ENCODE measurements at regions of chr18 and their contacts with region 1.

Region 1: DNA sequence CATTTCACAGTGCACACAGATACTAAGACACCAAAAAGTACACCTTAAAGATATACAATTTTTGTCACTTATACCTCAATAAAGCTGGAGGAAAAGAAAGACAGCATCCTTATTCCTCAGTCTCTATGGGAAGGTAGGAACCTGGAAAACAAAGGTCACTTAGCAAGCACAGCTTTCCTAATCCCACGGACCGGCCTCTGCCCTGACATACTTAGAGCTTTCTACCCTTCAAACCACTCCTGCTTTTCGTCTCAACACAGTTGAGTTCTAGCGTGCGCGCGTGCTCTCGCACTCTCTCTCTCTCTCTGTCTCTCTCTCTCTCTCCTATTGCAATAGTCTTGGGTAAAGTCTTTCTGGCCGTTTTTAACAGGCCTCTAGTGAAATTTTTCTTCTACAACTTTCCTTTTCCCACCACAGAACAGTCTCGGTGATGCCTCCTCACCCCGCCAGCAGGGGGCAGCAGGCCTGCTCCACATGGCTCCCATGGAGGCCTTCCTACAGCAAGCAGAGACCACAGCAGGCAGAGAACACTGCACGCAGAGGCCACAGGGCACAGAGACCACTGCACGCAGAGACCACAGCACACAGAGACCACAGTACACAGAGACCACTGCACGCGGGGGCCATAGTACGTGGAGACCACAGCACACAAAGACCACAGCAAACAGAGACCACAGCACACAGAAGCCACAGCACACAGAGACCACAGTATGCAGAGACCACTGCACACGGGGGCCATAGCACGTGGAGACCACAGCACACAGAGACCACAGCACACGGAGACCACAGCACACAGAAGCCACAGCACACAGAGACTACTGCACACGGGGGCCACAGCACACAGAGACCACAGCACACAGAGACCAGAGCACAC is 106.9 kb downstream of the FBXO15 start:
- DNase-seq: peak; percentile 62
- H3K4me3 Mint-ChIP-seq: no peak overlapping the region
- H3K27ac Mint-ChIP-seq: no peak overlapping the region
- H3K4me1 Mint-ChIP-seq: no peaks in the 10 kb centered on the region
- H3K27me3 Mint-ChIP-seq: no peaks in the 10 kb centered on the region

Region 2: GRCh38 chr18:73980289-73980979 is 60.3 kb before region 1 on chr18:
- intact Hi-C with region 1: no loop called
- DNase-seq: no peak
- H3K4me3 Mint-ChIP-seq: no peak overlapping the region
- H3K27ac Mint-ChIP-seq: no peak overlapping the region
- H3K4me1 Mint-ChIP-seq: peaks cover 7% of the 10 kb centered on the region
- H3K27me3 Mint-ChIP-seq: peaks cover 2% of the 10 kb centered on the region

Region 3: GRCh38 chr18:74063023-74063422 is 22.3 kb after region 1 on chr18:
- intact Hi-C with region 1: loop called (anchors 1 kb)
- DNase-seq: no peak
- H3K4me3 Mint-ChIP-seq: peak overlapping the region; percentile 19
- H3K27ac Mint-ChIP-seq: peak overlapping the region; percentile 77
- H3K4me1 Mint-ChIP-seq: peaks cover 50% of the 10 kb centered on the region
- H3K27me3 Mint-ChIP-seq: no peaks in the 10 kb centered on the region

Region 4: GRCh38 chr18:74116633-74117554 is 76.2 kb after region 1 on chr18:
- intact Hi-C with region 1: loop called (anchors 1 kb)
- DNase-seq: no peak
- H3K4me3 Mint-ChIP-seq: no peak overlapping the region
- H3K27ac Mint-ChIP-seq: no peak overlapping the region
- H3K4me1 Mint-ChIP-seq: peaks cover 8% of the 10 kb centered on the region
- H3K27me3 Mint-ChIP-seq: peaks cover 2% of the 10 kb centered on the region

Region 5: DNA sequence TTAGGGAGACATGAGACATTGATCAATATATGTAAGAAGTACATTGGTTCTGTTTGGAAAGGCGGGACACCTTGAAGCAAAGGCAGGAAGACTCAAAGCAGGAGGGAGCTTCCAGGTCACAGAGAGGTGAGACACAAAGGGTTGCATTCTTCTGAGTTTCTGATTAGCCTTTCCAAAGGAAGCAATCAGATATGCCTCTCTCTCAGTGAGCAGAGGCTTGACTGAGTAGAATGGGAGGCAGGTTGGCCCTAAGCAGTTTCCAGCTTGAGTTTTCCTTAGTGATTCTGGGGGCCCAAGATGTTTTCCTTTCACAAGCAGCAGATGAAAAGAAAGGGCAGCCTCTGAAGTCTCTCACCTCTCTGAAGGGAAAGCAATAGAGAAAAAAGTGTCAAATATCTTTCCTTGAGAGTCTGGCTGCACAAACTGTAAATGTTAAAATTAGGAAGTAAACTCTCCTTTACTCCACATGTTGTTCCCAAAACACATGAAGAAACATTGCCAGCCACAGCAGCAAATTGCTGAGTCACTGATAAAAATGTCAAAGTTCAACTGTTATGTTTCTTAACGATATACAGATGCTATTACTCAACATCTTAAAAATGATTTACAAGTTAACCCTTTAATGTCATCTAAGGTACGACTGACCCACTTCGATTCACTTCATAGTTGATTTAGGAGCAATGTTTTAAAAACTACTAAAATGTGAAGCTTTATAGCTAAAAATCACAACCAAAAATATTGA is 210.8 kb after region 1 on chr18:
- intact Hi-C with region 1: no loop called
- DNase-seq: no peak
- H3K4me3 Mint-ChIP-seq: no peak overlapping the region
- H3K27ac Mint-ChIP-seq: no peak overlapping the region
- H3K4me1 Mint-ChIP-seq: peaks cover 19% of the 10 kb centered on the region
- H3K27me3 Mint-ChIP-seq: no peaks in the 10 kb centered on the region

Region 6: GRCh38 chr18:74342416-74343043 is 301.8 kb after region 1 on chr18:
- intact Hi-C with region 1: loop called (anchors 1 kb)
- DNase-seq: no peak
- H3K4me3 Mint-ChIP-seq: no peak overlapping the region
- H3K27ac Mint-ChIP-seq: no peak overlapping the region
- H3K4me1 Mint-ChIP-seq: no peaks in the 10 kb centered on the region
- H3K27me3 Mint-ChIP-seq: peaks cover 18% of the 10 kb centered on the region

Region 7: GRCh38 chr18:74551936-74552555 is 511.4 kb after region 1 on chr18:
- intact Hi-C with region 1: loop called (anchors 2 kb)
- DNase-seq: peak; percentile 60
- H3K4me3 Mint-ChIP-seq: no peak overlapping the region
- H3K27ac Mint-ChIP-seq: no peak overlapping the region
- H3K4me1 Mint-ChIP-seq: peaks cover 6% of the 10 kb centered on the region
- H3K27me3 Mint-ChIP-seq: peaks cover 13% of the 10 kb centered on the region

Measured in activated T-helper 1 cell treated with anti-CD3 and anti-CD28 coated beads, Interleukin-12 subunit alpha, Interleukin-12 subunit beta, Interleukin-2, Interleukin-4 antibody, amounts not matched to agents 30 ng/mL and 10 ng/mL and 1 ng/mL, durations not matched to agents 14 hours and 24 hours and 36 hours (primary cell).